ENCODE measurements at regions of chr9 and their contacts with region 1.

Region 1: DNA sequence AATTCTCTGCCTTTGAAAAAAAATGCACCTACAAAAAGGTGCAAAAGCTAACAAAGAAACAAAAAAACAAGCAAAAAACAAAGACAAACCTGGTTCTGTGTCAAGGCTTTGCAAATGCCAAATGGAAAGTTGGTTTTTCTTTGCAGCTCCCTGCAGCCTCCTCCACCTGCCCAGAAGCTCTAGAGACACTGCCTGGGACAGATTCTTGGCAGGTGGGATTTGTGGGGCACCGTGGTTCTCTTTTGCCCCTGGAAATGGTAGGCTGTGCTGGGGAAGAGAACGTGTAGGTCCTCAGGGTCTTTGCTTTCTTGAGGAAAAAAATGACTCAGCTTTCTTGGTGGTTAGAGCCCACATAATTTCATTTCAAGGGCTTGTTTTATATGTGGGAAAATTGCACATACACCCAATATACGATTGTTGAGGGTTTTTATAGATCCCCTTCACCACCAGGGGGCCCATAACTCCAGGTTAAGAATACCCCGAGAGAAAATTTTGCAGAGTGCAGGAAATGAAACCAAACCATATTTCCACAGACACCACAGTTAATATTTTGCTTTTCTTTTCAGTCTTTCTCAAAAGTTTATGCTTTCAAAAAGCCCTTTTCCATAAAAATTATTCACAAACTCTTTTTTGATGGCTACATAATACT is 58.7 kb downstream of the NXNL2 start:
- DNase-seq: peak; percentile 56 to 65
- H3K4me3 ChIP-seq: no peak overlapping the region
- H3K27ac ChIP-seq: no peak overlapping the region
- H3K4me1 ChIP-seq: peaks cover 0 to 10% of the 10 kb centered on the region in 2 donors
- H3K27me3 ChIP-seq: no peaks in the 10 kb centered on the region
- CTCF ChIP-seq: peak; percentile 56 to 74 (median 66)
- POLR2A ChIP-seq: no peak

Region 2: DNA sequence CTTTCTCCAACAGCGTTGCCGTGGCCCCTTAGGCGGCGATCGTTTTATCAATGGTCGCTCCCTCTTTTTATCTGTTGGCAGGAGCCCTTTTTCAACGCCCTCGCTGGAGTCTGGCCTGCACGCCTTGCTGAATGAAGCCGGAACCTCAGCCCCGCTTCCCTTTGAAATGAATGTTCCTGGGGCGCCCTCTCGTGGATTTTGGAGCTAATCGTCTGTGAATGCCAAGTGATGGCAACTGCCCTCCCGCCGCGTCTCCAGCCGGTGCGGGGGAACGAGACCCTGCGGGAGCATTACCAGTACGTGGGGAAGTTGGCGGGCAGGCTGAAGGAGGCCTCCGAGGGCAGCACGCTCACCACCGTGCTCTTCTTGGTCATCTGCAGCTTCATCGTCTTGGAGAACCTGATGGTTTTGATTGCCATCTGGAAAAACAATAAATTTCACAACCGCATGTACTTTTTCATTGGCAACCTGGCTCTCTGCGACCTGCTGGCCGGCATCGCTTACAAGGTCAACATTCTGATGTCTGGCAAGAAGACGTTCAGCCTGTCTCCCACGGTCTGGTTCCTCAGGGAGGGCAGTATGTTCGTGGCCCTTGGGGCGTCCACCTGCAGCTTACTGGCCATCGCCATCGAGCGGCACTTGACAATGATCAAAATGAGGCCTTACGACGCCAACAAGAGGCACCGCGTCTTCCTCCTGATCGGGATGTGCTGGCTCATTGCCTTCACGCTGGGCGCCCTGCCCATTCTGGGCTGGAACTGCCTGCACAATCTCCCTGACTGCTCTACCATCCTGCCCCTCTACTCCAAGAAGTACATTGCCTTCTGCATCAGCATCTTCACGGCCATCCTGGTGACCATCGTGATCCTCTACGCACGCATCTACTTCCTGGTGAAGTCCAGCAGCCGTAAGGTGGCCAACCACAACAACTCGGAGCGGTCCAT is 407.6 kb after region 1 on chr9:
- intact Hi-C with region 1: loop called (anchors 2 kb)
- DNase-seq: peak; percentile 90 to 96
- H3K4me3 ChIP-seq: no peak overlapping the region
- H3K27ac ChIP-seq: peak overlapping the region in 1 of 3 donors; percentile 60
- H3K4me1 ChIP-seq: peaks cover 8 to 34% of the 10 kb centered on the region in 2 donors
- H3K27me3 ChIP-seq: no peaks in the 10 kb centered on the region
- CTCF ChIP-seq: peak; percentile 48 to 91 (median 87)
- POLR2A ChIP-seq: no peak

Region 3: GRCh38 chr9:89278997-89279739 is 685.5 kb after region 1 on chr9:
- intact Hi-C with region 1: loop called (anchors 5 kb)
- DNase-seq: no peak
- H3K4me3 ChIP-seq: no peak overlapping the region
- H3K27ac ChIP-seq: no peak overlapping the region
- H3K4me1 ChIP-seq: peaks cover 8 to 19% of the 10 kb centered on the region in 2 donors
- H3K27me3 ChIP-seq: no peaks in the 10 kb centered on the region
- CTCF ChIP-seq: peak; percentile 46 to 83 (median 72)
- POLR2A ChIP-seq: no peak